Dendritic cell treated with granulocyte-macrophage colony-stimulating factor and Interleukin-4, amounts not matched to agents 40 ng/mL and 50 ng/mL, for 4 days (primary cell): ENCODE measurements at regions of chr2 and their contacts with region 1.

Region 1: GRCh38 chr2:195656859-195657633 is at the start of gene SLC39A10:
- H3K4me3 Mint-ChIP-seq: peak within 1 kb of the TSS; percentile 93
- H3K27ac Mint-ChIP-seq: peak within 1 kb of the TSS; percentile 94
- H3K4me1 Mint-ChIP-seq: peaks cover 23% of the 10 kb centered on the region
- H3K27me3 Mint-ChIP-seq: no peaks in the 10 kb centered on the region

Region 2: GRCh38 chr2:195407782-195408181 is 249.3 kb before region 1 on chr2:
- intact Hi-C with region 1: no loop called
- H3K4me3 Mint-ChIP-seq: no peak overlapping the region
- H3K27ac Mint-ChIP-seq: no peak overlapping the region
- H3K4me1 Mint-ChIP-seq: no peaks in the 10 kb centered on the region
- H3K27me3 Mint-ChIP-seq: no peaks in the 10 kb centered on the region

Region 3: DNA sequence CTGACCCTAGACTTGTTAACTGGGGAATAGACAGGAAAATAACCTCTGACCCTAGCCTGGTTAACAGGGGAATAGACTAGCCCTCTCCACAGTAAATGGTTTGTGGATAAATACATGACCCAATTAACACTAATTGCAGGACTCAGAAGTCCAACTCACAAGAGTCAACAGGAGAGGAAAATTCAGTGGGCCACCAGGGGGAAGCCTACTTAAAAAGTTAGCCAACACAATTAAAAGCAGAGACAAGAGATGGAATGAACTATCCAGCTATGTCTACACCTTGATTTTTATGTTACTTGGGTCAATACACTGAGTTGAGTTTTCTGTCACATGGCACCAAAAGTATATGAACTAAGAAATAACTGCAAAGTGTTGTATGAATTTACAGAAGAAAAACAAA is 158.9 kb before region 1 on chr2:
- intact Hi-C with region 1: loop called (anchors 1 kb)
- H3K4me3 Mint-ChIP-seq: no peak overlapping the region
- H3K27ac Mint-ChIP-seq: no peak overlapping the region
- H3K4me1 Mint-ChIP-seq: no peaks in the 10 kb centered on the region
- H3K27me3 Mint-ChIP-seq: no peaks in the 10 kb centered on the region

Region 4: GRCh38 chr2:195575879-195576401 is 81.1 kb before region 1 on chr2:
- intact Hi-C with region 1: loop called (anchors 1 kb)
- H3K4me3 Mint-ChIP-seq: peak overlapping the region; percentile 13
- H3K27ac Mint-ChIP-seq: peak overlapping the region; percentile 82
- H3K4me1 Mint-ChIP-seq: peaks cover 53% of the 10 kb centered on the region
- H3K27me3 Mint-ChIP-seq: no peaks in the 10 kb centered on the region

Region 5: DNA sequence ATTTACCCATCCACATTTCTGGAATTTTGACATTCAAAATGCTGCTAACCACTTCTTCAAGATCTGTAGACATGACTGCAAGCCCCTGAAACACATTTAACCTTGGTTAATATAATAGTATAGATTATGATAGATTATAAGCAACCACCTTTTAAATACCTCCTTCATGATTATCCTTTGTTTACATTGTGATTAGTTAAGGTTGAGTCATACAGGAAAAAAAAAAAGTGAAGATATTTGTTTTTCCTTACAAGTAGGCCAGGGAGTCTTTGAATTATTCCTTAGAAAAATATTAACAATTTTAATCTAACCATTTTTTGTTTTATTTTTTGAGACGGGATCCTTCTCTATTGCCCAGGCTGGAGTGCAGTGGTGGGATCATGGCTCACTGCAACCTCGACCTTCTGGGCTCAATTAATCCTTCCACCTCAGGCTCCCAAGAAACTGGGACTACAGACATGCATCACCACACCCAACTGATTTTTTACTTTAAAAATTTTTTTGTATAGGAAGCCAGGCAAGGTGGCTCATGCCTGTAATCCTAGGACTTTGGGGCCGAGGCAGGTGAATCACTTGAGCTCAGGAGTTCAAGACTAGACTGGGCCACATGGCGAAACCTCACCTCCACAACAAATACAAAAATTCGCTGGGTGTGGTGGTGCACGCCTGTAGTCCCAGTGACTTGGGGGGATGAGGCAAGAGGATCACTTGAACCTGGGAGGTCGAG is 99.3 kb after region 1 on chr2:
- intact Hi-C with region 1: no loop called
- H3K4me3 Mint-ChIP-seq: no peak overlapping the region
- H3K27ac Mint-ChIP-seq: no peak overlapping the region
- H3K4me1 Mint-ChIP-seq: no peaks in the 10 kb centered on the region
- H3K27me3 Mint-ChIP-seq: no peaks in the 10 kb centered on the region

Region 6: GRCh38 chr2:195937176-195937575 is 280.1 kb after region 1 on chr2:
- intact Hi-C with region 1: loop called (anchors 5 kb)
- H3K4me3 Mint-ChIP-seq: no peak overlapping the region
- H3K27ac Mint-ChIP-seq: no peak overlapping the region
- H3K4me1 Mint-ChIP-seq: no peaks in the 10 kb centered on the region
- H3K27me3 Mint-ChIP-seq: no peaks in the 10 kb centered on the region